Motor neuron (in vitro differentiated cells): ENCODE measurements at regions of chr17 and their contacts with region 1.

Region 1: GRCh38 chr17:37327341-37328090 is 48.3 kb upstream of the C17orf78 start:
- ATAC-seq: peak in 2 of 8 experiments; percentile 93 to 97
- H3K4me3 ChIP-seq: no peak overlapping the region
- H3K27ac ChIP-seq: no peak overlapping the region
- H3K4me1 ChIP-seq: no peaks in the 10 kb centered on the region

Region 2: GRCh38 chr17:37239690-37240334 is 87.7 kb before region 1 on chr17:
- in situ Hi-C with region 1: loop called in 1 of 9 experiments (anchors 25 kb)
- ATAC-seq: peak in 2 of 8 experiments; percentile 43 to 73
- H3K4me3 ChIP-seq: no peak overlapping the region
- H3K27ac ChIP-seq: no peak overlapping the region
- H3K4me1 ChIP-seq: no peaks in the 10 kb centered on the region